Posterior vena cava (tissue), 2 donors: ENCODE measurements at regions of chr18 and their contacts with region 1.

Region 1: GRCh38 chr18:4704781-4705180 is 249.7 kb upstream of the DLGAP1 start:
- DNase-seq: no peak

Region 2: DNA sequence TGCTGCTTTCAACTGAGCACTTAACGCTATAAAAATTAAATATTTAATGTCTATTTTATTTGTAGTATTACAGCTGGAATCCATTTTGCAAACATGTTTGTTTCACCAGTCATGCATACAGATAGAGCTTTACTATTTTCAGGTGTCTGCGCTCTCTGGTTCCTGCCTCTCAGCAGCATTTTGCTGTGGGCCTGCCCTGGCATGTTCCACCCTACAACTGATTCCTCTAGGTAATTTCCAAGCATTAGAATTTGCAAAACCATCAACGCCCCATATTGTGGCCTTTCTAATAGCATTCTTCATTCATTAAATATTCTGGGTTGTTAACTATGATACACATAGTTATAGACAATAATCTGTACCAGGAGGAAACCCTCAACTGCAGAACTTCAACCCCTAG is 16.8 kb after region 1 on chr18:
- intact Hi-C with region 1: loop called in 1 of 2 experiments (anchors 1 kb)
- DNase-seq: no peak